ENCODE measurements at regions of chr22 and their contacts with region 1.

Region 1: GRCh38 chr22:33440756-33441155 is 382.6 kb upstream of the SYN3 start:
- DNase-seq: no peak
- ATAC-seq: peak in 1 of 8 donors; percentile 26
- H3K4me3 ChIP-seq: no peak overlapping the region
- H3K27ac ChIP-seq: no peak overlapping the region
- H3K4me1 ChIP-seq: peaks cover 0 to 22% (median 13%) of the 10 kb centered on the region in 9 donors
- H3K27me3 ChIP-seq: no peaks in the 10 kb centered on the region
- CTCF ChIP-seq: no peak

Region 2: DNA sequence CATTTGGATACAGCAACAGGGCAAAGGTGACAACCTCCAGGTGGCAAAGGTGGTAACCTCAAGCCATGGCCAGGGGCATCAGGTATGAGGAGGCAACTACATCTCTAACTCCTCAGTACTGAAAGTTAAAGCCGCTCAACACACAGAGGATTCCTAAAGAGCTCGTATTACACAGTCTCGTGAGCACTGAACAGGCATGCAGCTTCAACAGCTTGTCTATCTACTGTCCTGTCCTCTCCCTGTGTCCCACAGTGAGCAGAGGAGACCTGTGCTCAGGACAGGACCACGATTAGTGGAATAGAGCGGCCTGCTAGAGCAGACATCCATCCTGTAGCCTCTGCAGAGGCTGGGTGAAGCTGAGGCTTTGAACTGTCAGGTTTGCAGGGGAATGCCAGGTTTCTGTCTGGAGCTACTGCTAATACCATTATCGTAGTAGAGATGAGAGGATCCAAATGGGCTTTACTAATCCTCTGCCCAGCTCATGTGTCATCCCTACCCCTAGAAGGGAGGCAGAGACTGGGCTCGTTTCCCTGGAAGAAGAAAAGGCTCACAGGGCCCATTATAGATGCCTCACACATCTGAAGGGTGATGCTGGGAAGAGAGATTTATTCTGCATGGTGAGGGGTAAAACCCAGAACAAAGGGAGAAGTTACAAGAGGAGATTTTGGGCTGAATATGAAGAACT is 64.3 kb after region 1 on chr22:
- intact Hi-C with region 1: loop called in 1 of 10 experiments (anchors 10 kb)
- DNase-seq: no peak
- ATAC-seq: peak in 2 of 8 donors; percentile 33 to 59
- H3K4me3 ChIP-seq: no peak overlapping the region
- H3K27ac ChIP-seq: no peak overlapping the region
- H3K4me1 ChIP-seq: peaks cover 0 to 19% (median 9%) of the 10 kb centered on the region in 9 donors
- H3K27me3 ChIP-seq: no peaks in the 10 kb centered on the region
- CTCF ChIP-seq: no peak

Measured in heart right ventricle (tissue), 16 donors.